ENCODE measurements at regions of chr9 and their contacts with region 1.

Region 1: GRCh38 chr9:121278535-121279261 is 10.7 kb downstream of the GSN start:
- DNase-seq: peak; percentile 50
- H3K4me3 Mint-ChIP-seq: no peak overlapping the region
- H3K27ac Mint-ChIP-seq: no peak overlapping the region
- H3K4me1 Mint-ChIP-seq: peaks cover 5% of the 10 kb centered on the region
- H3K27me3 Mint-ChIP-seq: no peaks in the 10 kb centered on the region

Region 2: DNA sequence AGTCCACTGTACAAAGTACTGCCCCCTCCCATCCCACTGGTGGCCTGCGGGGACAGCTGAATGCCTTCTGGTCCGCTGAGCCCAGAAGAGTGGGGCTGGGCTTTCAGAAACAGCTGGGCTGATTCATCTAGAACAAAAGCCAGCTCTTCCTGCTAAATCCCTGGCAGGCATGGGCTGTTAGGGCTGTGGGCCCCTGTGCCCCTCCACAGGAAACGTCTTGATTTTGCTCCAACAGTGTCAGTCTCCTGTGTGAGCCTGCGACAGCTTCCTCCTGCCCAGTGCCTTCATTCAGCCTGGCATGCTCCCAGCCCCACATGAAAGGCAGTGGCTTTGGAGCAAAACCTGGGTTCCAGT is 17.6 kb before region 1 on chr9:
- CTCF ChIA-PET with region 1: interaction called, 12 read pairs
- POLR2A ChIA-PET with region 1: no interaction called
- DNase-seq: no peak
- H3K4me3 Mint-ChIP-seq: no peak overlapping the region
- H3K27ac Mint-ChIP-seq: no peak overlapping the region
- H3K4me1 Mint-ChIP-seq: no peaks in the 10 kb centered on the region
- H3K27me3 Mint-ChIP-seq: no peaks in the 10 kb centered on the region

Region 3: GRCh38 chr9:121267689-121268597 is 10.8 kb before region 1 on chr9 and contains the start of gene GSN:
- CTCF ChIA-PET with region 1: interaction called, 31 read pairs
- POLR2A ChIA-PET with region 1: interaction called, 5 read pairs
- DNase-seq: peak; percentile 69
- H3K4me3 Mint-ChIP-seq: peak within 1 kb of the TSS; percentile 66
- H3K27ac Mint-ChIP-seq: no peak within 1 kb of the TSS
- H3K4me1 Mint-ChIP-seq: peaks cover 18% of the 10 kb centered on the region
- H3K27me3 Mint-ChIP-seq: peaks cover 17% of the 10 kb centered on the region
- total RNA-seq, gene GSN: 5.8 to 6.0 TPM

Region 4: GRCh38 chr9:121299467-121300234 is 21.0 kb after region 1 on chr9:
- CTCF ChIA-PET with region 1: interaction called, 10 read pairs
- POLR2A ChIA-PET with region 1: interaction called, 5 read pairs
- DNase-seq: no peak
- H3K4me3 Mint-ChIP-seq: peak overlapping the region; percentile 60
- H3K27ac Mint-ChIP-seq: no peak overlapping the region
- H3K4me1 Mint-ChIP-seq: peaks cover 16% of the 10 kb centered on the region
- H3K27me3 Mint-ChIP-seq: peaks cover 20% of the 10 kb centered on the region

Measured in activated CD4-positive, alpha-beta memory T cell treated with anti-CD3 and anti-CD28 coated beads, Interleukin-2, amount 10 ng/mL, durations not matched to agents 7 days and 5 days (primary cell).